ENCODE measurements at regions of chr5 and their contacts with region 1.

Region 1: GRCh38 chr5:15821506-15821905 is 321.5 kb downstream of the FBXL7 start:
- DNase-seq: no peak
- H3K4me3 ChIP-seq: no peak overlapping the region
- H3K27ac ChIP-seq: no peak overlapping the region
- H3K4me1 ChIP-seq: no peaks in the 10 kb centered on the region
- H3K27me3 ChIP-seq: no peaks in the 10 kb centered on the region
- CTCF ChIP-seq: no peak

Region 2: DNA sequence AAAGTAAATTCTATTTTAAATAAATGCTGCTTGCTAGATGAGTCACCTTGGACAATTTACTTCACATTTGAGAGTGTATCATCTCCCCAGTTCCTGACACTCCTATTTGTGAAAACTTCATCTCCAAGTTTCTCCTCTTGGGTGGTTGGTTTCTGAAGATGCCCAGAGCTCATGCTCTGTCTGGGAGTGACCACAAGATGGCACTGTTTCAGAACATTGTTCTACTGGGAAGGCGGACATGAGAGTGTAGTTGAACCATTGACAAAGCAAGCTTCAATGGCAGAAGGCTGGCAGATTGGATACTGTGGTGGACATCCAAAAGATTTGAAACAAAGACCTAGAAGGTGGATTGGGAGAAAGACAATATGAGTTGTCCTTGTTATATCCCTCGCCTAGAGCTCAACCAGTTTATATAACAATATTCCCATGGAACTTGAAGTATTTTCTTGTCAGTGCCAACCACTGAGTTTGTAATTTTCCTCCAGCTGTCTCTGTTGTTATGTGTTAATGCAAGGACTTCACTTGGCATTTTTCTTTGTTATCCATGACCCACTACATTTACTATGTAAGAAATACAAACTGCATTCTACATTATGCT is 715.6 kb before region 1 on chr5:
- CTCF ChIA-PET with region 1: no interaction called
- dilution Hi-C with region 1: no loop called
- in situ Hi-C with region 1: no loop called
- intact Hi-C with region 1: loop called (anchors 10 kb)
- DNase-seq: peak; percentile 41
- H3K4me3 ChIP-seq: no peak overlapping the region
- H3K27ac ChIP-seq: no peak overlapping the region
- H3K4me1 ChIP-seq: no peaks in the 10 kb centered on the region
- H3K27me3 ChIP-seq: no peaks in the 10 kb centered on the region
- CTCF ChIP-seq: peak; percentile 79 to 88

Region 3: DNA sequence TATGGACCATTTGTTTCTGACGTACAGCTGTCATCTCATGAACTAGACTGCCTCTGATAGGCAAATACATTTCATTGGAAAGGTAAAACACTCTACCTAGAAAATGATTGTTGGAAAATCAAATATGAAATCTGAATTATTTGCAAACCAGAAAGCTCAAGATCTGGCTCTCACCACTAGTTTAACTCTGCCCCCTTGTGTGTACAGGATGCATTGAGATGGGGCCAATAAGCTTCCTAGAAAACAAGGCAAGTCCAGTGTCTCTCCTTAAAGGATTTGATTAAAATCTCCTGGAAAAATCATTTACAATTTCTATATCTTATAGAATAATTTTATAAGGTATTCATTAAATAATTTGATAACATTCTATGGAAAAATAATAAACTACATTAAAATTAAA is 638.0 kb before region 1 on chr5:
- CTCF ChIA-PET with region 1: no interaction called
- dilution Hi-C with region 1: no loop called
- in situ Hi-C with region 1: no loop called
- intact Hi-C with region 1: loop called (anchors 10 kb)
- DNase-seq: no peak
- H3K4me3 ChIP-seq: no peak overlapping the region
- H3K27ac ChIP-seq: no peak overlapping the region
- H3K4me1 ChIP-seq: no peaks in the 10 kb centered on the region
- H3K27me3 ChIP-seq: no peaks in the 10 kb centered on the region
- CTCF ChIP-seq: peak in 1 of 2 donors; percentile 6

Region 4: GRCh38 chr5:15463231-15463980 is 358.1 kb before region 1 on chr5:
- CTCF ChIA-PET with region 1: no interaction called
- dilution Hi-C with region 1: no loop called
- in situ Hi-C with region 1: no loop called
- intact Hi-C with region 1: loop called (anchors 1 kb)
- DNase-seq: no peak
- H3K4me3 ChIP-seq: no peak overlapping the region
- H3K27ac ChIP-seq: no peak overlapping the region
- H3K4me1 ChIP-seq: no peaks in the 10 kb centered on the region
- H3K27me3 ChIP-seq: no peaks in the 10 kb centered on the region
- CTCF ChIP-seq: no peak

Region 5: DNA sequence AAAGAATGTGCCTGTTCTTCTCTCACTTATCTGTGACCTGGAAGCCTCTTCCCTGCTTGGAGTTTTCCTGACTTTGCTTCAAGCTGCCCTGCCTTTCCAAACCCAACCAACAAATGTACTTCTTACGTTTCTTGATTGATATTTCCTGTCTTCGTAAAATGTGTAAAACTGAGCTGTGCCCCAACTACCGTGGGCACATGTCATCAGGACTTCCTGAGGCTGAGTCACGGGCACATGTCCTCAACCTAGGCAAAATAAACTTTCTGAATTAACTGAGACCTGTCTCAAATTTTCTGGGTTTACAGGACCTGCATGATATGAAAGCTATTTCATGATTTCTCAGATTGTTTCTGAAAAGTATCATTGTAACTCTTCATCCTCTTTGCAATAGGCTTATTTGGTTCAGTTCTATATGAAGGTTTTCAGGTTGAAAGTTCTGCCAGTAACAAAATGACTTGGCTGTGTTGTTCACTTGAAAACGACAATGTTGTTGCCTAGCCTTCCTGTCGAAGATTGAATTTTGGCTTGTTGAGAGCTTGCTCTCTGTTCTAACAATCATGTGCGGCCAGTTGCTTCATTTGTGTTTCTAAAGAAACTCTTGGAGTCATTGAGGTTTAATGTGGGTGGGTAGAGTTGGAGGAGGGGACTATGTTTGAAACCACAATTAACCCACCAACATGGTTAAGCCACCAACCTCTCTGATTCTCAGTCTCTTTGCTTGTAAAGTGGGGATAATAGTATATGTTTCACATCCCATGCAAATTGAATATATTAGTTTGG is 175.9 kb before region 1 on chr5:
- CTCF ChIA-PET with region 1: no interaction called
- dilution Hi-C with region 1: no loop called
- in situ Hi-C with region 1: no loop called
- intact Hi-C with region 1: no loop called
- DNase-seq: no peak
- H3K4me3 ChIP-seq: no peak overlapping the region
- H3K27ac ChIP-seq: no peak overlapping the region
- H3K4me1 ChIP-seq: no peaks in the 10 kb centered on the region
- H3K27me3 ChIP-seq: no peaks in the 10 kb centered on the region
- CTCF ChIP-seq: no peak

Measured in mammary epithelial cell (primary cell).